ENCODE measurements at regions of chrX and their contacts with region 1.

Region 1: GRCh38 chrX:118528071-118528737 is 32.6 kb downstream of the DOCK11 start:
- DNase-seq: peak; percentile 68
- ATAC-seq: peak; percentile 64
- H3K4me3 ChIP-seq: peak overlapping the region; percentile 19 to 68 (median 52)
- H3K4me3 Mint-ChIP-seq: peak overlapping the region; percentile 91
- H3K27ac ChIP-seq: peak overlapping the region; percentile 78 to 87
- H3K27ac Mint-ChIP-seq: peak overlapping the region; percentile 95
- H3K4me1 ChIP-seq: peaks cover 60 to 67% of the 10 kb centered on the region in 2 donors
- H3K4me1 Mint-ChIP-seq: peaks cover 70% of the 10 kb centered on the region
- H3K27me3 ChIP-seq: no peaks in the 10 kb centered on the region
- H3K27me3 Mint-ChIP-seq: no peaks in the 10 kb centered on the region
- CTCF ChIP-seq: no peak

Region 2: DNA sequence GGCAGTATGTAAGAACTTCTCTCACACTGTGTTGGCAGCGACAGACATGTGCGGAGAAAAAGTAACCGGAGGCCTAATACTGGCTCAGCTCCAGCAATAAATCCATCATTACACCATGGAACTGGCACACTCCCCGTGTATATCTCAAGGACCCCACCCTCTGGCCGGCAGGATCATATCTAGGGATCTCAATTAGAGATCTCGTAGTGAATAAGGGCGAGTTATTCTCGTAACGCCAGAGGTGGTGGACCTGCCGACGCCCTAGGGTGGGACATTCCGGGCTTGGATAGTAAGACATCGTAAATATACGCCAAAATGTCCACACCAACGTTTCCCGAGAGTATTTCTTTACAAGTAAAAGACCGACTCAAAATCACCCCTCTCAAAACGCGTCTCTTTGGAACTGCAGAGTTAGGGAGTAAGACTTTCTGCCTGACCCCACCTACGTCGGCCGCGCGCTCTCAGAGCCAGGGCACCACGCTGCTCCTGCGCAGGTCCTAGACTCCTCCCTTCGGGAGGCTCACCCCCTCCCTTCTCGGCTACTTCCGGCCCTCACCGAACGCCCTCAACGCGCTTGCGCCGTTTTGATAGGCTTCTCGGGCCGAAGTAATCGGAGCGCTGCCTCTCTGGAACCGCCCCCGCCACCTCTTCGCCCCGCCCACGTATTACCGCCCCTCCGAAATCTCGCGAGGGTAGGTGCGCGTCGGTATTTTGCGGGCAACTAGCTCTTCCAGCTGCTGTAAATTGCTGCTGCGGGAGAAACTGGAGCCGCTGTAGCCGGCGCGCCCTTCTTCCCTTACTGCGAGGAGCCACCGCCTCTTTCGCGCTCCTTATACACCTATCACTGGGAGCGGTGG is 182.6 kb before region 1 on chrX and contains the start of gene WDR44:
- CTCF ChIA-PET with region 1: no interaction called
- POLR2A ChIA-PET with region 1: no interaction called
- intact Hi-C with region 1: loop called (anchors 10 kb)
- DNase-seq: peak; percentile 95
- ATAC-seq: peak; percentile 89
- H3K4me3 ChIP-seq: peak within 1 kb of the TSS; percentile 73 to 86 (median 78)
- H3K4me3 Mint-ChIP-seq: peak within 1 kb of the TSS; percentile 98
- H3K27ac ChIP-seq: peak within 1 kb of the TSS; percentile 88 to 89
- H3K27ac Mint-ChIP-seq: peak within 1 kb of the TSS; percentile 98
- H3K4me1 ChIP-seq: peaks cover 28 to 35% of the 10 kb centered on the region in 2 donors
- H3K4me1 Mint-ChIP-seq: peaks cover 33% of the 10 kb centered on the region
- H3K27me3 ChIP-seq: no peaks in the 10 kb centered on the region
- H3K27me3 Mint-ChIP-seq: no peaks in the 10 kb centered on the region
- CTCF ChIP-seq: no peak
- total RNA-seq, gene WDR44: 20.8 and 24.4 TPM in 2 replicates

Region 3: GRCh38 chrX:118383120-118383519 is 145.1 kb before region 1 on chrX:
- CTCF ChIA-PET with region 1: no interaction called
- POLR2A ChIA-PET with region 1: no interaction called
- intact Hi-C with region 1: no loop called
- DNase-seq: no peak
- ATAC-seq: no peak
- H3K4me3 ChIP-seq: no peak overlapping the region
- H3K4me3 Mint-ChIP-seq: no peak overlapping the region
- H3K27ac ChIP-seq: no peak overlapping the region
- H3K27ac Mint-ChIP-seq: no peak overlapping the region
- H3K4me1 ChIP-seq: no peaks in the 10 kb centered on the region
- H3K4me1 Mint-ChIP-seq: no peaks in the 10 kb centered on the region
- H3K27me3 ChIP-seq: no peaks in the 10 kb centered on the region
- H3K27me3 Mint-ChIP-seq: no peaks in the 10 kb centered on the region
- CTCF ChIP-seq: no peak

Region 4: GRCh38 chrX:118502161-118502789 is 25.9 kb before region 1 on chrX:
- CTCF ChIA-PET with region 1: interaction called, 5 read pairs
- POLR2A ChIA-PET with region 1: no interaction called
- intact Hi-C with region 1: loop called (anchors 2 kb)
- DNase-seq: peak; percentile 38
- ATAC-seq: peak; percentile 62
- H3K4me3 ChIP-seq: peak overlapping the region in 1 of 5 experiments; percentile 6
- H3K4me3 Mint-ChIP-seq: peak overlapping the region; percentile 69
- H3K27ac ChIP-seq: peak overlapping the region; percentile 70 to 87
- H3K27ac Mint-ChIP-seq: peak overlapping the region; percentile 88
- H3K4me1 ChIP-seq: peaks cover 47 to 73% of the 10 kb centered on the region in 2 donors
- H3K4me1 Mint-ChIP-seq: peaks cover 59% of the 10 kb centered on the region
- H3K27me3 ChIP-seq: no peaks in the 10 kb centered on the region
- H3K27me3 Mint-ChIP-seq: no peaks in the 10 kb centered on the region
- CTCF ChIP-seq: no peak

Region 5: DNA sequence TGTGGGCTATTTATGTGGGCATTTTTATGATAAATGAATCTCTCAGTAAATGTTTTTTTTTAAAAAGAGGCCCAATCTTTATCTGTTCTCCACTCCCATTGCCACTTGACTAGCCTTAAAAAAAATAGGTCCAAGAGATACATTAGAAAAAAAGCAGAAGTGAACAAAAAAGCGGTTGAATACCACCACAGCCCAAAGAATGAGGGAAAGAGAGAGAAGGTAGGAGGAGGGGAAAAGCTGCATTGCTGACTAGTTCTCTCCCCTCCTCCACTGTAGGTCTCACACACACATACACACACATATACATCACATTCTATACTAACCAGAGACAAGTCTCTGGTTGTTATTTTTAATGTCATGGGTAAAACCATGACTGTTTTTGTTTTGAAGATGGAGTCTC is 103.4 kb after region 1 on chrX:
- CTCF ChIA-PET with region 1: interaction called, 5 read pairs
- POLR2A ChIA-PET with region 1: interaction called, 11 read pairs
- intact Hi-C with region 1: no loop called
- DNase-seq: peak; percentile 60
- ATAC-seq: peak; percentile 70
- H3K4me3 ChIP-seq: no peak overlapping the region
- H3K4me3 Mint-ChIP-seq: no peak overlapping the region
- H3K27ac ChIP-seq: peak overlapping the region in 1 of 2 donors; percentile 34
- H3K27ac Mint-ChIP-seq: peak overlapping the region; percentile 82
- H3K4me1 ChIP-seq: peaks cover 16 to 17% of the 10 kb centered on the region in 2 donors
- H3K4me1 Mint-ChIP-seq: peaks cover 29% of the 10 kb centered on the region
- H3K27me3 ChIP-seq: no peaks in the 10 kb centered on the region
- H3K27me3 Mint-ChIP-seq: no peaks in the 10 kb centered on the region
- CTCF ChIP-seq: no peak

Measured in B cell (primary cell).